ENCODE measurements at regions of chr16 and their contacts with region 1.

Region 1: GRCh38 chr16:81558444-81559175 is 114.0 kb downstream of the CMIP start:
- DNase-seq: peak; percentile 86 to 88
- H3K4me3 ChIP-seq: no peak overlapping the region
- H3K27ac ChIP-seq: peak overlapping the region; percentile 56
- H3K4me1 ChIP-seq: peaks cover 38% of the 10 kb centered on the region
- H3K27me3 ChIP-seq: no peaks in the 10 kb centered on the region
- CTCF ChIP-seq: no peak

Region 2: GRCh38 chr16:81493755-81494433 is 64.7 kb before region 1 on chr16:
- CTCF ChIA-PET with region 1: no interaction called
- POLR2A ChIA-PET with region 1: no interaction called
- intact Hi-C with region 1: loop called (anchors 2 kb)
- DNase-seq: peak; percentile 92 to 96
- H3K4me3 ChIP-seq: peak overlapping the region; percentile 28; the same call in 1 of the 2 replicates
- H3K27ac ChIP-seq: peak overlapping the region; percentile 91
- H3K4me1 ChIP-seq: peaks cover 42% of the 10 kb centered on the region
- H3K27me3 ChIP-seq: no peaks in the 10 kb centered on the region
- CTCF ChIP-seq: no peak

Region 3: DNA sequence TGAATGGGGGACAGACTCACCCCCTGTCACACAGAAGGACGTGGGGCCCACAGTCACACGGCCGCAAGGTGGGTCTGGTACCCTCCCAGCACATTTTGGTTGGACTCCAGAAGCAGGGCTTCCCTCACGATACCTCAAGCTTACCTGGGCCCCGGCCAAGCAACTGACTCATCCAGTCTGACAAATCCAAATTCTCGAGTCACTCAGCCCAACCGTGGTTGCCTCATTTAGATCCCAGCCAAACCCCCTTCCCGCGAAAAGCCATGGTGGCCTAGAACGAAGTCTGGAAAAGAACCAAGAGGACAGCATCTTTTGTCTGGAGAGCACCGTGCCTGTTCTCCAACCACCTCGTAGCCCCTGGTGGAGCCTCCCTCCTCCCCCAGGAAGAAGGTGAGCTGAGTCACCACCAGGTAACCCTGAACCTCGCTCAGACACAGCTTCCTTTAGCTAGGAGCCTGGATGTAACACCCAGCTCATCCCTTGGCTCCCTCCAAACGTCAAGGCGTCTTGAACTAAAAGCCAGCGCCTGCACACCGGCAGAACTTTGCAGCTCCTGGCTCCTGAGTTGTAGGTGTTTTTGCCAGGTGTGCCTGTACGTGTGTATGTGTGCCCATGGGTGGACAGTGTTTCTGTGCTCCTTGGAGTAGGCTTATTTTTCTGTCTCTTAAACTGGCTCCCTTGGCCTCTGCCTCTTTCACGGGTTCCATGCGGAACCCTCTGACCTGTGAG is 35.1 kb before region 1 on chr16:
- CTCF ChIA-PET with region 1: no interaction called
- POLR2A ChIA-PET with region 1: no interaction called
- intact Hi-C with region 1: loop called (anchors 2 kb)
- DNase-seq: peak; percentile 91 to 92
- H3K4me3 ChIP-seq: 0 out of 2 replicates have a peak overlapping the region, but pooled peaks have one; percentile 1
- H3K27ac ChIP-seq: peak overlapping the region; percentile 73
- H3K4me1 ChIP-seq: peaks cover 71% of the 10 kb centered on the region
- H3K27me3 ChIP-seq: no peaks in the 10 kb centered on the region
- CTCF ChIP-seq: no peak

Region 4: GRCh38 chr16:81531419-81531821 is 27.2 kb before region 1 on chr16:
- CTCF ChIA-PET with region 1: no interaction called
- POLR2A ChIA-PET with region 1: interaction called, 3 read pairs
- intact Hi-C with region 1: loop called (anchors 1 kb)
- DNase-seq: peak in 1 of 2 experiments; percentile 84
- H3K4me3 ChIP-seq: no peak overlapping the region
- H3K27ac ChIP-seq: no peak overlapping the region
- H3K4me1 ChIP-seq: peaks cover 19% of the 10 kb centered on the region
- H3K27me3 ChIP-seq: no peaks in the 10 kb centered on the region
- CTCF ChIP-seq: no peak

Region 5: GRCh38 chr16:81585785-81586184 is 27.2 kb after region 1 on chr16:
- CTCF ChIA-PET with region 1: interaction called, 12 read pairs
- POLR2A ChIA-PET with region 1: no interaction called
- intact Hi-C with region 1: loop called (anchors 1 kb)
- DNase-seq: peak in 1 of 2 experiments; percentile 32
- H3K4me3 ChIP-seq: no peak overlapping the region
- H3K27ac ChIP-seq: peak overlapping the region; percentile 68
- H3K4me1 ChIP-seq: peaks cover 62% of the 10 kb centered on the region
- H3K27me3 ChIP-seq: no peaks in the 10 kb centered on the region
- CTCF ChIP-seq: peak; percentile 52

Region 6: DNA sequence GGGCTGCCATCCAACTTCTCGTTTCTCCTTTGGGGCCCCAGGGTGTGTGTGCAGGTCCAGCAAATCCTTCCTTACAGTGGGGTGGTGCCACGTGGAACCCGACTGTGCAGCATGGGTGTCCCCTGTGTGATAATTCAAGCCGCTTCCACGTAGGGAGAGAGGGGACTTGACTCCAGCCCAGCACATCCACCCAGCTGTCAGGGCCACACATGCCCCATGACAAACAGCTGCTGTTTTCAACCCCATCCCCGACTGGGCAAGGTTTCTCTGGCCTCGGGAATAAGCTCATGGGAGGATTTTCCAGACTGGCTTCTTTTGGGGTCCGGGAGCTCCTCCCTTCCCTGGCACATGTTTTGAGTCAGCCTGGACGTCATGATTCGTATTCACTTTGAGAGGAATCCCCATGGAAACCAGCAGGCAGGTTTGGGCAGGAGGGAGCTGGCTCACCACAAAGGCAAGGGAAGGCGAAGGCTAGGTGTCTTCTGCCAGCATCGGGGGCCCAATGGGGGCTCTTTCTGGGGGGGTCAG is 42.4 kb after region 1 on chr16:
- CTCF ChIA-PET with region 1: interaction called, 3 read pairs
- POLR2A ChIA-PET with region 1: no interaction called
- intact Hi-C with region 1: loop called (anchors 2 kb)
- DNase-seq: peak in 1 of 2 experiments; percentile 53
- H3K4me3 ChIP-seq: no peak overlapping the region
- H3K27ac ChIP-seq: no peak overlapping the region
- H3K4me1 ChIP-seq: peaks cover 17% of the 10 kb centered on the region
- H3K27me3 ChIP-seq: no peaks in the 10 kb centered on the region
- CTCF ChIP-seq: no peak